Cardiac septum (tissue), 1 donor: ENCODE measurements at regions of chr22 and their contacts with region 1.

Region 1: DNA sequence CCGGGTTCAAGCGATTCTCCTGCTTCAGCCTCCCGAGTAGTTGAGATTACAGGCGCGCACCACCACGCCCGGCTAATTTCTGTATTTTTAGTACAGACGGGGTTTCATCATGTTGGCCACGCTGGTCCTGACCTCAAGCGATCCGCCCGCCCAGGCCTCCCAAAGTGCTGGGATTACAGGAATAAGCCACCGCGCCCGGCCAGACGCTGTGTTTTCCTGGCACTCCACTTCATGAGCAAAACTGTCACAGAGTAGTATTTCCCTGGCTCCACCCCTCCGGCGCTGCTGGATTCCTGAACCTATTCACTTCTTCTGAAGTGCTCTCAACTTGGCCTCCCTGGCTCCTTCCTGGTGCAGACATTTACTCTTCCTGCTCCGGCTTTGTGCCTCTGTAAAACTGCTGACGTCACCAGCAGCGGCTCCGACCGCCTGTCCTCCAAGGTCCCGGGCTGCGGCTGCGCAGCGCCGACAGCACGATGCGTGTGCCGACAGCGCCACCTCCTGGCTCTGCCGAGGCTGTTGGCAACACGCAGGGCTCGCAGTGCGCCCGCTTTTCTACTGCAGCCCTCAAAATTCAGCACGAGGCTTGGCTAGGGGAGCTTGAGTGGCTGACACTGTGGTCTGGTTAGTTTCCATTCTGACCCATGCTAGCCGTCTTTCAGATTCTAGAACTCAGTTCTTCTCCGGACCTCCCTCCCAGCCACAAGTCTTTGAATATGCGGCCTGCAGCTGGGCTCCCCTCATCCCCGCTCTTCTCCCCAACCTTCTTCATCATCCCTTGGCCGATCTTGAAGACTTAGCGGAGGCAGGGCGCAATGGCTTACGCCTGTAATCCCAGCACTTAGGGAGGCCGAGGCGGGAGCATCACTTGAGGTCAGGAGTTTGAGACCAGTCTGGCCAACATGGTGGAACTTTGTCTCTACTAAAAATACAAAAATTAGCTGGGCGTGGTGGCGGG is 36.6 kb downstream of the APOL3 start:
- DNase-seq: peak; percentile 96

Region 2: DNA sequence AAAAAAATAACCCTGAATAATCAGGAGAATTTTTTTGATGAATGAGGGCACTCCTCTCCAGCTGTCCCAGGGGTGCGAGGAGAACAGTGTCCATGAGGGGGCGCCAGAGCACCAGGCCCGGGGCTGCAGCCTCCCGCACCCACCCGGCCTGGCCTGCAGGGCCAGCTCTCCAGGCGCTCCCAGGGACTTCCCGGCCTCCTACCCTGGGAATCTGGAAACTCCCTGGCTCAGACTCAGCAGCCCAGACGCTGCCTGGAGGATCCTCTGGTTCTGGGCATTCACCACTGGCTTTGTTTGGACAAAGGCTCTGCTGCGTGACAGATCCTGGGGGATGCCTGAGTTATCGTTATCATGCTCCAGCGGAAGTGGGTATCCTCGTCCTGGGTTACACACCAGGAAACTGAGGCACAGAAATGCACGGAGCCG is 693.0 kb before region 1 on chr22:
- intact Hi-C with region 1: loop called (anchors 2 kb)
- DNase-seq: peak; percentile 94

Region 3: DNA sequence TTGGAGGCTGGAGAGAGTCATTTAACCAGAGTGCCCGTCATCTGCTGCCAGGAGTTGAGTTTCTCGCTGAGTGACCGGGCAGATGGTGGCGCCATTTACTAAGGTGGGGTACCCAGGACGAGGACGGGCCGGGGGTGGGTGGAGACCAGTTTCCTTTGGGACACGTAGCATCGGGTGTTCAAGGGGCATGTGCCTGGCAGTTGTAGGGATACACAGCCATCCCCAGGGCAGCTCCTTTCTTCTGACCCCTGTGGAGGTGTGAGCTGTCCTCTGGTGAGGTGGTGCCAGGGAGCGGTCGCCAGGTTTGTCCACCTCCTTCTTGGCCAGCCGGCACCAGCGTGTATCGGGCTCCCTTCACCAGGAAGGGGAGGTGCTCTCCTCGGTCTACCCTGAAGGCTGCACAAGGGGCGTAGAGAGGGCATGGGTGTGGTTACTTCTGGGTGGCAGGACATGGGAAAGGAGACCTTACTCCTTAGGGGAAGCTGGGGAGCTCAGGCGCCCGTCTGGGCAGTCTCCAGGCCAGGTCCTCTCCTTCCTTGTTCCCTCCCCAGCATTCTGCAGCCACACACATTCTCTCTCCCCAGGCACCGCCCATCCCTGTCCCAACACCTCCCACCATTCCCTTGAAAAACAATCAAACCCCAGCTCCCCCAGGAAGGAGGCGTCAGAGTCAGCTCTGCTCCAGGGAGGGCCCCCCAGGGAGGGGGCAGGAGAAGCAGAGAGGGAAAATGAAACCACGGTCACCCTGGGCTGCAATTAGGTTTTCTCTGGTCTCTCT is 496.5 kb before region 1 on chr22:
- intact Hi-C with region 1: loop called (anchors 2 kb)
- DNase-seq: peak; percentile 90

Region 4: GRCh38 chr22:35930933-35931332 is 193.0 kb before region 1 on chr22:
- intact Hi-C with region 1: loop called (anchors 1 kb)
- DNase-seq: no peak

Region 5: GRCh38 chr22:35947794-35948425 is 176.0 kb before region 1 on chr22:
- intact Hi-C with region 1: loop called (anchors 5 kb)
- DNase-seq: no peak

Region 6: GRCh38 chr22:36065775-36066559 is 58.0 kb before region 1 on chr22:
- intact Hi-C with region 1: loop called (anchors 2 kb)
- DNase-seq: peak; percentile 91

Region 7: DNA sequence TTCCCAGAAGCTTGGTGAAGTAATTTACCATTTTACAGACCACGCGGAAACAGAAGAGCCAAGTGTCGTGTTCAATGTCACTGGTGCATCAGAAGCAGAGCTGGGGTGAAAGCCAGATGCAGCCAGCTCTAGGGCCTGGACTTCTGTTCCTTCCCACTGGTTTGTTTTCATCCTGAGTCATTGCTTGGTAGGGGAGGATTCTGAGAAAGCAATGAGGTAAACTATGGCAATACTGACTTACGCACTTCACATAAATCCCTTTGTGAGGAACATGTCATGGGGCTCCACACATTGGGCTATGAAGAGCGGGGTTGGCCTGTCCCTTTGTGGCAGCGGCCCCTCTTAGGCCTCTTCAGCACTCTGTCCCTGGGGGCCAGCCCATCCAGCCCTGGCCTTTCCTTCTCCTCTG is 42.9 kb before region 1 on chr22:
- intact Hi-C with region 1: no loop called
- DNase-seq: no peak